ENCODE measurements at regions of chr10 and their contacts with region 1.

Region 1: GRCh38 chr10:3740157-3740871 is 44.7 kb downstream of the KLF6 start:
- DNase-seq: peak; percentile 83
- ATAC-seq: peak; percentile 95
- H3K4me3 ChIP-seq: no peak overlapping the region
- H3K27ac ChIP-seq: peak overlapping the region; percentile 95
- H3K4me1 ChIP-seq: peaks cover 24% of the 10 kb centered on the region
- H3K27me3 ChIP-seq: no peaks in the 10 kb centered on the region
- CTCF ChIP-seq: no peak

Region 2: DNA sequence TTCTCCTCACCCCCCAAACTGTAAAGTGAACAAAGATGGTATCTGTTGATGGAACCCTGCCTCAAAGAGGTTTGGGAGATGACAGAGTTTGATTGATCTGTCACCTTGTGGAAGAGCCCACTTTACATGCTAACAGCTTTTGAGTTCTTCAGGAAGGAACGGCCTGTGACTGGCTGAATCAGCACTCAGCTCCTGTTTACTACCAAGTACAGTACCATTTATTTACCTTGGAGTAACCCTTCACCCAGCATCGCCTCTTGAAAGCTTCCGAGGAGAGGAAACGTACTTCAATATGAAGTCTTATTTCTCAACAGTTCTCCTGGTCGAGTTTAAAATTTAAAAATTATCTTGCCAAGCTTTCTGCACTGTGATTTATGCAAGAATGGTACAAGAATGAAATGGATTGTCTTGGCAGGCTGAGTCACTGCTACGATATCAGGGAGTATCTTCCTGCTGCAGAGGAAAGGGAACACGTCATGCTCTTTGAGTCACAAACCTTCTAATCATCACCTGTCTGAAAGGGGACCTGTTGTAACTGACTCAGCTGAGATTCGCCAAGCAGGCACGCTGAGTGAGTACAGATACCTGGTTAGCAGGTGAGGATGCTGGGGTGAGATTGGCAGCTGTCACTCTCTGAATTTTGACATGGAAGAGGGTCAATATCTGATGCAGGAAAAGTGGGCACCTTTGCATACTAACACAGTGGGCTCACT is 14.6 kb after region 1 on chr10:
- CTCF ChIA-PET with region 1: interaction called, 4 read pairs
- POLR2A ChIA-PET with region 1: interaction called, 20 read pairs
- intact Hi-C with region 1: no loop called
- DNase-seq: peak; percentile 86
- ATAC-seq: peak; percentile 89
- H3K4me3 ChIP-seq: no peak overlapping the region; the same call in 1 of the 2 replicates
- H3K27ac ChIP-seq: peak overlapping the region; percentile 98
- H3K4me1 ChIP-seq: peaks cover 42% of the 10 kb centered on the region
- H3K27me3 ChIP-seq: no peaks in the 10 kb centered on the region
- CTCF ChIP-seq: no peak

Region 3: DNA sequence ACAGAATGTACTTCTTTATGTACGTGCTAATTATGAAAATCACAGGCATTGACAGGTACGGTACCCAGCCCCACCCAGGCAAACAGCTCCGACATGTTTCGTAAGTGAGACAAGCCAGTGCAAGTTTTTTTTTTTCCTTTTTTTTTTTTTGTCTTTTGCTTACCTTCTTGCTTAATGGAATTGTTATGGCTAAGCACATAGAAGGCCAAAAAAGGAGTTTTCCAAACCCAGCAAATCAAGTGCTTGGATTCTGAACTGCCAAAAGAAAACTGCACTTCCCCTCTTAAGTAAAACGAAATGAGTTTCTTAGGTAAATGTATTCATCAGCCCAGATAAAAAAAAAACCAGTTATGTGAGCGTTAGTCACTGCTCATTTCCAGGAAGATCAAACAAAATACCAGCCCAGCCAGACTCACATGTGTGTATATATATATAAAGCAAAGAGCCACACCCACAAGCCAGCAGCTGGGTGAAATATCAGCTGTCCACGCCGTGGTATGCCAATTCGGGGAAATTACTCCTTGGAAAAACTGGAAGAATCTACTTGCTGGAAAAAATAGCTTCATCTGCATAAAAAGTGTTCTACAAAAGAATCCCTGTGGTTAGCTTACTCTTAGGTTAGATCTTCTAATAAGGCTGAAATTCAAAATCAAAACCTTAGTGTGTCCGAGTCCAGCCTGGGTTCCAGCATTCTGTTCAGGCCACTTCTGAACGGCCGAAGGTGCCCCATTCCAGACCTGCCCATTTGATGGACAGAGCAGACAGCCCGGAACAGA is 36.7 kb after region 1 on chr10:
- CTCF ChIA-PET with region 1: no interaction called
- POLR2A ChIA-PET with region 1: no interaction called
- intact Hi-C with region 1: loop called (anchors 1 kb)
- DNase-seq: peak; percentile 83
- ATAC-seq: peak; percentile 18
- H3K4me3 ChIP-seq: no peak overlapping the region
- H3K27ac ChIP-seq: peak overlapping the region; percentile 86
- H3K4me1 ChIP-seq: peaks cover 65% of the 10 kb centered on the region
- H3K27me3 ChIP-seq: no peaks in the 10 kb centered on the region
- CTCF ChIP-seq: no peak